ENCODE measurements at regions of chr2 and their contacts with region 1.

Region 1: GRCh38 chr2:191218292-191218898 is 26.8 kb upstream of the MYO1B start:
- DNase-seq: no peak
- ATAC-seq: peak; percentile 85
- H3K4me3 ChIP-seq: no peak overlapping the region
- H3K27ac ChIP-seq: no peak overlapping the region
- H3K4me1 ChIP-seq: peaks cover 6% of the 10 kb centered on the region
- H3K27me3 ChIP-seq: no peaks in the 10 kb centered on the region
- CTCF ChIP-seq: peak; percentile 46 to 69 (median 47); a peak in 5 of 6 replicates
- EP300 ChIP-seq: no peak
- POLR2A ChIP-seq: no peak
- RAD21 ChIP-seq: peak; percentile 68

Region 2: GRCh38 chr2:191064590-191064989 is 153.8 kb before region 1 on chr2:
- CTCF ChIA-PET with region 1: no interaction called
- POLR2A ChIA-PET with region 1: no interaction called
- RAD21 ChIA-PET with region 1: no interaction called
- SMC1A ChIA-PET with region 1: no interaction called
- in situ Hi-C with region 1: no loop called
- intact Hi-C with region 1: no loop called
- DNase-seq: no peak
- ATAC-seq: no peak
- H3K4me3 ChIP-seq: no peak overlapping the region
- H3K27ac ChIP-seq: no peak overlapping the region
- H3K4me1 ChIP-seq: no peaks in the 10 kb centered on the region
- H3K27me3 ChIP-seq: no peaks in the 10 kb centered on the region
- CTCF ChIP-seq: no peak
- EP300 ChIP-seq: no peak
- POLR2A ChIP-seq: no peak
- RAD21 ChIP-seq: no peak

Region 3: DNA sequence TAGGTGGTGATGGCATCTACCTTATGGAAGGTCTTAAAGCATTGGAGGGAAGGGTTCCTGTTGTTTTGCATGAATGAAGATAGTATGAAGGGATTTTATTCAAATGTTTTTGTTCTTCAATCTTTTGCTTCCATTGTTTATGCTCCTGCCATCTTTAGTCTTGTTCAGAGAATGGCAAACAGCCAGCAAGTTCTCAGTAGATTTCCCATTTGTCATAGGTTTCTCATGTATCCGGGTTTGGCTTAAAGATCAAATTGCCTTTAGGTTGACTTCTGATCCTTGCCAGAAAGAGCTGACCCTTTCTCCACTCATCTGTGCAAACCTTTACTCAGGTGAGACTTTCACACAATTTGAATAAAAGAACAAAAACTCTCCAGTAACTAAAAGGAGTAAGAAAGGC is 23.4 kb before region 1 on chr2:
- CTCF ChIA-PET with region 1: interaction called, 9 read pairs
- POLR2A ChIA-PET with region 1: no interaction called
- RAD21 ChIA-PET with region 1: no interaction called
- SMC1A ChIA-PET with region 1: interaction called, 5 read pairs
- in situ Hi-C with region 1: no loop called
- intact Hi-C with region 1: loop called (anchors 2 kb)
- DNase-seq: no peak
- ATAC-seq: no peak
- H3K4me3 ChIP-seq: no peak overlapping the region
- H3K27ac ChIP-seq: no peak overlapping the region
- H3K4me1 ChIP-seq: peaks cover 18% of the 10 kb centered on the region
- H3K27me3 ChIP-seq: no peaks in the 10 kb centered on the region
- CTCF ChIP-seq: no peak
- EP300 ChIP-seq: no peak
- POLR2A ChIP-seq: no peak
- RAD21 ChIP-seq: no peak

Region 4: DNA sequence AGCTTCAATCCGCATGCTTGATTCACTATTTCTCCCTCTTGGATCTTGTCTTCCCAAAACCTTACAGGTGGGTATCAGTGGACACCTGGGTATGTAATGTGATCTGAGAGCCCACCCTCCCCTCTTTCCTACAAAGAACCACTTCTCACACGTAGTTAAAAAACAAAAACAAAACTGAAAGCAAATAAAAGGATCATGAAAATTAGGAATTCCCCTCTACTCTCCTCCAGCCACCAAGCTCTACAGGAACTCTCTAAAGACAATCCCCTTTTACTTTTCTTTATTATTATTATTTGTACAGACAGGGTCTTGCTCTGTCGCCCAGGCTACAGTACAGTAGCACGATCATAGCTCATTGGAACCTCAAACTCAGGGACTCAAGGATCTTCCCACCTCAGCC is 14.0 kb before region 1 on chr2:
- CTCF ChIA-PET with region 1: interaction called, 11 read pairs
- POLR2A ChIA-PET with region 1: no interaction called
- RAD21 ChIA-PET with region 1: no interaction called
- SMC1A ChIA-PET with region 1: interaction called, 3 read pairs
- in situ Hi-C with region 1: no loop called
- intact Hi-C with region 1: no loop called
- DNase-seq: no peak
- ATAC-seq: peak; percentile 72
- H3K4me3 ChIP-seq: 0 out of 2 replicates have a peak overlapping the region, but pooled peaks have one; percentile 4
- H3K27ac ChIP-seq: peak overlapping the region; percentile 46
- H3K4me1 ChIP-seq: no peaks in the 10 kb centered on the region
- H3K27me3 ChIP-seq: no peaks in the 10 kb centered on the region
- CTCF ChIP-seq: no peak
- EP300 ChIP-seq: no peak
- POLR2A ChIP-seq: no peak
- RAD21 ChIP-seq: no peak

Region 5: DNA sequence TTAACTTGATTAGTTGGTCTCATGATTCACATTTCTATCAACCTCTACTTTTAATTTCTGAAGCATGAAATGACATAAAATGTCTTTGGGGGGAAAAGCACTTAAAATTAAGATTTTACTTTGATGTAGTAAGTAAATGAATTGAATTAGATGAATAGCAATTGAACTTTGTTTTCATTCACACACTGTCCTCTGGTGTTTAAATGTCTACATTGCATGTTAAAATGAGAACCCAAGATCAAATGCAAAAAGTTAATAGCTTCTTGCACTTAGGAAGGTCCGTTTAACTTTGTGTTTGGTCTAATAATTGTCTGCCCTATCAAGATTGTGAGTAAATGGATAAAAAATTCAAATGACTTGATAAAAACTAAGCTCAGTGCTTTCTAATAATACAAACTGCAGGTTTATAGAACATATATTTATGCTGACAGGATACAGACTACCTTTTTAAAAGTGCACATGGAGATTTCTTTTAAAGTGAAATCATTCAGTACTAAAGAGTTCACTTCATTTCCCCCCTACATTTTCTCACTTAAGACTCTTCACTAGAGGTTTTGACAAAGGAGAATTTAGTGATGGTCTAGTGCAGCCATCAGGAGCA is 303.3 kb after region 1 on chr2:
- CTCF ChIA-PET with region 1: interaction called, 9 read pairs
- POLR2A ChIA-PET with region 1: no interaction called
- RAD21 ChIA-PET with region 1: no interaction called
- SMC1A ChIA-PET with region 1: no interaction called
- in situ Hi-C with region 1: no loop called
- intact Hi-C with region 1: loop called (anchors 1 kb)
- DNase-seq: no peak
- ATAC-seq: 0 out of 3 replicates have a peak, but pooled peaks have one; percentile 31
- H3K4me3 ChIP-seq: no peak overlapping the region
- H3K27ac ChIP-seq: no peak overlapping the region
- H3K4me1 ChIP-seq: no peaks in the 10 kb centered on the region
- H3K27me3 ChIP-seq: no peaks in the 10 kb centered on the region; a peak in 2 of 4 replicates
- CTCF ChIP-seq: peak; percentile 51 to 66 (median 61)
- EP300 ChIP-seq: no peak
- POLR2A ChIP-seq: no peak
- RAD21 ChIP-seq: peak; percentile 69

Region 6: DNA sequence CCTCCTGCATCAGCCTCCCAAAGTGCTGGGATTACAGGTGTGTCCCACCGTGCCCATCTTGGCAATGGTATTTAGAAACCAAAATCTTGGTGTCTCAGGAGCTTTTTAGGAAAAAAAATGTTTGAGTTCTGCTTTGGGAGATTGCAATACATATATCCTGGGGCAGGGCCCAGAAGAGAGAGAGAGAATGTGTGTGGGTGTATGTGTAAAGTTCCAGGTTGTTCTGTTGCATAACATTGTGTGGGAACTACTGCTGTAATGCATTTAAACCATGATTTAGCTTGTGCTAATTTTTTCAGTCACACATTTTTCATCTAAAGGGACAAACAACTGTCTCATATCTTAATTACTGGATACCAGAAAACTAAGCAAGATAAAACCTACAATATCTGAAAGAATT is 388.7 kb after region 1 on chr2:
- CTCF ChIA-PET with region 1: no interaction called
- POLR2A ChIA-PET with region 1: no interaction called
- RAD21 ChIA-PET with region 1: no interaction called
- SMC1A ChIA-PET with region 1: no interaction called
- in situ Hi-C with region 1: no loop called
- intact Hi-C with region 1: no loop called
- DNase-seq: no peak
- ATAC-seq: no peak
- H3K4me3 ChIP-seq: no peak overlapping the region
- H3K27ac ChIP-seq: no peak overlapping the region
- H3K4me1 ChIP-seq: peaks cover 9% of the 10 kb centered on the region
- H3K27me3 ChIP-seq: no peaks in the 10 kb centered on the region
- CTCF ChIP-seq: no peak
- EP300 ChIP-seq: no peak
- POLR2A ChIP-seq: no peak
- RAD21 ChIP-seq: no peak